ENCODE measurements at regions of chr12 and their contacts with region 1.

Region 1: GRCh38 chr12:59149997-59150642 is 229.8 kb upstream of the LRIG3 start:
- DNase-seq: no peak
- H3K4me3 ChIP-seq: no peak overlapping the region
- H3K27ac ChIP-seq: no peak overlapping the region
- H3K4me1 ChIP-seq: no peaks in the 10 kb centered on the region
- H3K27me3 ChIP-seq: no peaks in the 10 kb centered on the region
- CTCF ChIP-seq: peak in 2 of 3 experiments; percentile 94 to 99; a peak in 3 of 4 replicates
- EP300 ChIP-seq: no peak
- POLR2A ChIP-seq: no peak
- RAD21 ChIP-seq: peak; percentile 96 to 97

Region 2: DNA sequence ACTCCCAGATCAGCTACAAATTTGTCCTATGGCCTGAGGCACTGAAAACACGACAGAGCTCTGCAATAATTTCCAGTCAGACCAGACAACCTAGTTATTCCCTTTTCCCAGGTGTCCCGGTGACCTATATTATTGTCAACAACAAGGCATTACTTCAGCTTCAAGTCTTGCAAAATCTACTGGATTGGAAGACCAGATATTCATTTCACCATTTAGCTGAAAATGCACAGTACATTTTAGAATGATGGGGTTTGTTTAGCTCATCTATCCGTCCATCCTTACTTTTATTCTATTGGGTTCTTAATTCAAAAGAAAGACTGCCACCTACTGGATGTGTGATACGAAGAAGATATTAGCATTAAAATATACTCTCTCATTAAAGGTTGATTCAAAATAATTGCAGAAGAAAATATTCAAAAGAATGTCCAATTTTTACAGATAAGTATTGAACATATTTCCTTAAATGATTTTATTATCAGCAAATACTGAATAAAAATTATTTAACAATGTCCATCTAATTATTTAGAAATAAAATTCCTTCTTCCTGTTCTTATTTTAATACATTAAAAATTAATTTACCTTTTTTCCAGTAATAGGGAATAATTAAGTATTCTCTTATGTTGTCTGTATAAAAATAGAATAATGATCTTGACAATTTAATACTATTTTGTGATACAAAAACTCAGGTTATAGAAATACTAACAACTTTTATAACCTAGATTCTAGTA is 15.0 kb after region 1 on chr12:
- CTCF ChIA-PET with region 1: interaction called, 31 read pairs
- POLR2A ChIA-PET with region 1: no interaction called
- DNase-seq: no peak
- H3K4me3 ChIP-seq: no peak overlapping the region
- H3K27ac ChIP-seq: no peak overlapping the region
- H3K4me1 ChIP-seq: no peaks in the 10 kb centered on the region
- H3K27me3 ChIP-seq: no peaks in the 10 kb centered on the region
- CTCF ChIP-seq: peak in 1 of 3 experiments; percentile 26; a peak in 1 of 4 replicates
- EP300 ChIP-seq: no peak
- POLR2A ChIP-seq: no peak
- RAD21 ChIP-seq: peak in 1 of 2 experiments; percentile 40; a peak in 3 of 4 replicates

Measured in H1 (cell line).